Activated naive CD4-positive, alpha-beta T cell treated with anti-CD3 and anti-CD28 coated beads for 36 hours (primary cell): ENCODE measurements at regions of chr17 and their contacts with region 1.

Region 1: GRCh38 chr17:42980398-42981397 is at the start of gene RUNDC1:
- DNase-seq: peak; percentile 90
- H3K4me3 Mint-ChIP-seq: peak within 1 kb of the TSS; percentile 99
- H3K27ac Mint-ChIP-seq: peak within 1 kb of the TSS; percentile 90
- H3K4me1 Mint-ChIP-seq: peaks cover 36% of the 10 kb centered on the region
- H3K27me3 Mint-ChIP-seq: no peaks in the 10 kb centered on the region
- total RNA-seq, gene RUNDC1: 5.9 to 6.5 TPM

Region 2: DNA sequence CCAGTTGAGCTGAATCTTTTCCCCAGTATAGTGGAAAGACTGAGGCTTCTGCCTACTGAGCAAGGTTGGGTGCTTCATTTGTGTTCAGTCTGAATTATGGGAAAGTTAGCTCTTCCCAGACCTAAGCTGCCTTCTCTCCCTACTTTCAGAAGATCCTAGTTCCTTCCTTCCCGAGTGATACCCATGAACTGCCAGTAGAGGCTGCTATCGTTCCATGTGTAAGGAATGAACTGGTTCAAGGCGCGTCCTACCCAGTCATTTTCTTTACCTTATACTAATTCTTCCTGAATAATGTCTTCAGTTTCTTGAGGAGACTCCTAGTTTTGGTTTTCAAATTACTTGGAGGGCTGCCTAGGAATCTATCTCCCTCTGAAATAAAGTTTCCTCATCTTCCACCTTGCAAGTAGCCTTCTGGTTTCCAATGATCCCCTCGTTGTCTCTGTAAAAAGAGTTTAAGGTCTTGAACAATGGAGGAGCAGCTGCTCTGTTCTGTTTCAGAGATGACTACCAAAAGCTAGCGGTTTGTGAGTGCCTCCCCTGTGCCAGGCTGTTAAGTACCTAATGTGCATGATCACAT is 137.3 kb before region 1 on chr17:
- CTCF ChIA-PET with region 1: no interaction called
- intact Hi-C with region 1: loop called (anchors 1 kb)
- DNase-seq: peak; percentile 33
- H3K4me3 Mint-ChIP-seq: no peak overlapping the region
- H3K27ac Mint-ChIP-seq: no peak overlapping the region
- H3K4me1 Mint-ChIP-seq: peaks cover 13% of the 10 kb centered on the region
- H3K27me3 Mint-ChIP-seq: no peaks in the 10 kb centered on the region

Region 3: GRCh38 chr17:42953669-42954068 is 27.0 kb before region 1 on chr17:
- CTCF ChIA-PET with region 1: no interaction called
- intact Hi-C with region 1: no loop called
- DNase-seq: no peak
- H3K4me3 Mint-ChIP-seq: no peak overlapping the region
- H3K27ac Mint-ChIP-seq: no peak overlapping the region
- H3K4me1 Mint-ChIP-seq: no peaks in the 10 kb centered on the region
- H3K27me3 Mint-ChIP-seq: no peaks in the 10 kb centered on the region

Region 4: GRCh38 chr17:42964161-42964932 is 16.4 kb before region 1 on chr17 and contains the start of gene AARSD1:
- CTCF ChIA-PET with region 1: no interaction called
- intact Hi-C with region 1: loop called (anchors 2 kb)
- DNase-seq: peak; percentile 96
- H3K4me3 Mint-ChIP-seq: peak within 1 kb of the TSS; percentile 97
- H3K27ac Mint-ChIP-seq: peak within 1 kb of the TSS; percentile 91
- H3K4me1 Mint-ChIP-seq: peaks cover 21% of the 10 kb centered on the region
- H3K27me3 Mint-ChIP-seq: no peaks in the 10 kb centered on the region
- total RNA-seq, gene AARSD1: 48.4 to 49.3 TPM

Region 5: DNA sequence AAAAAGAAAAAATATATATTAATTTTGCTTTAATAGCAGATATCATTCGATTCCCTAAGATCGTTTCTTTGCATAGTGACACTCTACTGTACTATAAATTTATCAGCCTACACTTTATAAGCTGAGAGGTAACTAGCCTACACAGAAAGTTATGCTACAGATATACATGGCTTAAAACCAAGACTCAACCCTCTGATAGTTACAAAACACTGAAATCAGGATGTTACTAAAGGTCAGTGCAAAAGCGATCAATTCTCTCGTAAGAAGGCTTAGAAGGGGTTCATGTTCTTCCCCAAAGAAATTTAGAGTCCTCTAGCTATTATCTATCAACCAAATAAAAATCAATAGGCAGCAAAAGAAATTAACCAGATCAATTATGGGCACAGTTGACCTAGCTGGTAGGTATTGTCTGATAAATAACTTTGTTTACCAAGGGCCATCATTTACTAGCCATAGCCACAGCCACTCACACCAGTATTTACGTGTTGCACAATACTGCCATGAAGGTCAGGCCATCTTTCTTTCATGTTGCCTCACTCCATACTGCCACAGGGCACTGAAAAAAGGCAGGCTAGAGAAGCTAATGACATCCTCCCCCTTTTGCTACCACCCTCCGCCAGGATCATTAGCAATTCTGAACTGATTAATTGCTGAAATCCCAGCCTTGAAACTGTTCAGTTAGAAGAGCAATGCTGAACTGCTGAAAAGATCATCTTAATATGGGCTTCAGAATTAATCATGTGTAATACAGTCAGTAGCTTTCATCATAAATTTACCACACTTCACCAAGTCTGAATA is 88.1 kb after region 1 on chr17:
- CTCF ChIA-PET with region 1: no interaction called
- intact Hi-C with region 1: no loop called
- DNase-seq: no peak
- H3K4me3 Mint-ChIP-seq: no peak overlapping the region
- H3K27ac Mint-ChIP-seq: no peak overlapping the region
- H3K4me1 Mint-ChIP-seq: no peaks in the 10 kb centered on the region
- H3K27me3 Mint-ChIP-seq: no peaks in the 10 kb centered on the region